ENCODE measurements at regions of chr2 and their contacts with region 1.

Region 1: GRCh38 chr2:101793277-101793969 is 95.9 kb downstream of the MAP4K4 start:
- DNase-seq: peak in 1 of 9 donors; percentile 6
- ATAC-seq: no peak
- H3K4me3 ChIP-seq: no peak overlapping the region
- H3K4me3 Mint-ChIP-seq: peak overlapping the region in 2 of 10 donors; percentile 34 to 38
- H3K27ac ChIP-seq: no peak overlapping the region
- H3K27ac Mint-ChIP-seq: peak overlapping the region in 7 of 9 donors; percentile 10 to 78 (median 41)
- H3K4me1 ChIP-seq: peaks cover 0 to 45% of the 10 kb centered on the region in 2 donors
- H3K4me1 Mint-ChIP-seq: peaks cover 32 to 94% (median 90%) of the 10 kb centered on the region in 7 donors
- H3K27me3 ChIP-seq: no peaks in the 10 kb centered on the region
- H3K27me3 Mint-ChIP-seq: no peaks in the 10 kb centered on the region

Region 2: GRCh38 chr2:101442042-101442666 is 351.3 kb before region 1 on chr2:
- CTCF ChIA-PET with region 1: no interaction called
- POLR2A ChIA-PET with region 1: no interaction called
- intact Hi-C with region 1: no loop called
- DNase-seq: peak in 3 of 9 donors; percentile 4 to 10 (median 9)
- ATAC-seq: peak; percentile 32
- H3K4me3 ChIP-seq: no peak overlapping the region
- H3K4me3 Mint-ChIP-seq: peak overlapping the region in 1 of 10 donors; percentile 34
- H3K27ac ChIP-seq: no peak overlapping the region
- H3K27ac Mint-ChIP-seq: peak overlapping the region in 3 of 9 donors; percentile 25 to 46 (median 26)
- H3K4me1 ChIP-seq: peaks cover 0 to 8% of the 10 kb centered on the region in 2 donors
- H3K4me1 Mint-ChIP-seq: peaks cover 10 to 14% (median 11%) of the 10 kb centered on the region in 7 donors
- H3K27me3 ChIP-seq: no peaks in the 10 kb centered on the region
- H3K27me3 Mint-ChIP-seq: no peaks in the 10 kb centered on the region

Region 3: DNA sequence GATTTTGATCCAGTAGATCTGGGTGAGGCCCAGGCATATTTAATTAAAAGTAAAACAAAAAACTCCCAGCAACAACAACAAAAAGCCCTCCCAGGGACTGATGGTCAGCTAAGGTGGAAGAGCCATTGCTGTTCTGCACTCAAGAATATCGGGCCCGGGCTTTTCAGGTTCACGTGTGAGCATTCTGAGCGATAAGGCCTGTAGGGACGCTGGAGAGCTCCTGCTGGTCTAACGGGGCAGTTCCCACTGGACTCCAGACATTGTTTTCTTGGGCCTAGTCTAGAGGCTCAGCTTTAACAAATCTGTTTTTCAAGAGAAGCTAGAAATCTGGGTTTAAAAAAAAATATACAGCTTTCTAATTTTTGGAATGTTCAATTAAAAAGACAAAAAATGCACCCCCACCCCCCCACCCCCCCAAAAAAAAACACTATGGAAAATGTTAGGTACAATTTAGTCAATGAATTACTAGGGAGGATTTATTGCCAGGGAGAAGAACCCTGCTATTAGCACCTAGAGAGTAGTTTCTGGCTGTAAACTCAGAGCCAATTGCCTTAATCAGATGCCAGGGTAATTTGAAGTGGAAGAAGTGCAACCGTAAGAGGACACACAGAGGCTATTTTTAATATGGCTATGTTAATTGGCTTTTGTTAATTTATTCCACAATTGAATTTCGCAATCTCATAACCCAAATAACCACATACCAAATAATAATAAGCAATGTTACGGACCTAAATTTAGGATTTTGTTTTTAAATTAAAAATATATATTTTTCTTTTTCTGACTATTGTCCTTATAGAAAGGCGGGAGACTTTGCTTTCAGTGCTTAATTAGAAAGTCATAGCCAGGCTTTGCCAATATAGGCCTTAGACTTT is 17.0 kb before region 1 on chr2:
- CTCF ChIA-PET with region 1: no interaction called
- POLR2A ChIA-PET with region 1: interaction called, 3 read pairs
- intact Hi-C with region 1: loop called in 1 of 2 experiments (anchors 2 kb)
- DNase-seq: no peak
- ATAC-seq: no peak
- H3K4me3 ChIP-seq: no peak overlapping the region
- H3K4me3 Mint-ChIP-seq: peak overlapping the region in 1 of 10 donors; percentile 63
- H3K27ac ChIP-seq: no peak overlapping the region
- H3K27ac Mint-ChIP-seq: peak overlapping the region in 2 of 9 donors; percentile 66 to 87
- H3K4me1 ChIP-seq: peaks cover 13 to 88% of the 10 kb centered on the region in 2 donors
- H3K4me1 Mint-ChIP-seq: peaks cover 72 to 100% (median 96%) of the 10 kb centered on the region in 7 donors
- H3K27me3 ChIP-seq: no peaks in the 10 kb centered on the region
- H3K27me3 Mint-ChIP-seq: no peaks in the 10 kb centered on the region

Region 4: GRCh38 chr2:101805152-101806088 is 12.0 kb after region 1 on chr2:
- CTCF ChIA-PET with region 1: no interaction called
- POLR2A ChIA-PET with region 1: interaction called, 4 read pairs
- intact Hi-C with region 1: loop called in 1 of 2 experiments (anchors 2 kb)
- DNase-seq: no peak
- ATAC-seq: no peak
- H3K4me3 ChIP-seq: no peak overlapping the region
- H3K4me3 Mint-ChIP-seq: peak overlapping the region in 6 of 10 donors; percentile 4 to 33 (median 24)
- H3K27ac ChIP-seq: no peak overlapping the region
- H3K27ac Mint-ChIP-seq: peak overlapping the region; percentile 4 to 88 (median 36)
- H3K4me1 ChIP-seq: peaks cover 5 to 37% of the 10 kb centered on the region in 2 donors
- H3K4me1 Mint-ChIP-seq: peaks cover 39 to 92% (median 86%) of the 10 kb centered on the region in 7 donors
- H3K27me3 ChIP-seq: no peaks in the 10 kb centered on the region
- H3K27me3 Mint-ChIP-seq: no peaks in the 10 kb centered on the region

Region 5: DNA sequence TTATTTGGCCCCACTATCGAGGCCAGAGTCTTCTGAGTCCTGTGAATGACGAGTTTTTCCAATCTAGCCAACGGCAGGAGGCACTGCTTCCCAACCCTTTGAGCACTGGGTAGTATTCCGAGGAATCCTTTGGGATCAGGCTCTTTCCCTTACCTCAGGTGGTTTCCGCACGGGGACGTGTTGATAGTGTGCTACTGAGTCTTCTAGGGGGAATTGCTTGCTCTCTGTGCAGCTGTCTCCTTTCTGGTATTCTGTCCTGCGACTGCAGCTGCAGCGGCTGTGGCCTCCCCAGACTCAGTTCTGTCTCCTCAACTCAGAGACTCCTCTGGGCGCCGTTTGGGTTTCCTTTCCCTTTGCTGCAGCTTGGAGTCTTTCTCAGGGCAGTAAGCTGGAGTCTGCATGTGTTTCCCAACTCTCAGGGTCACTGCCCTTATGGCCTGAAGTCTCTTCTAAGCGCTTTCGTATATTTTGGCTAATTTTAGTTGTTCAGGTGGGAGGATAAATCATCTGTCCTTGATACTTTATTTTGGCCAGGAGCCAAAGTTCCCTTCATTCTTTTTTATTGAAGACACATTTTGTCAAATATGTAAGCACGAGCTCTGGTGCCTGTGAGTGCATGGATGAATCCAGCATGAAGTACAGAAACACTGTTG is 22.4 kb after region 1 on chr2:
- CTCF ChIA-PET with region 1: no interaction called
- POLR2A ChIA-PET with region 1: no interaction called
- intact Hi-C with region 1: loop called in 1 of 2 experiments (anchors 2 kb)
- DNase-seq: no peak
- ATAC-seq: no peak
- H3K4me3 ChIP-seq: no peak overlapping the region
- H3K4me3 Mint-ChIP-seq: peak overlapping the region in 4 of 10 donors; percentile 0 to 47 (median 8)
- H3K27ac ChIP-seq: no peak overlapping the region
- H3K27ac Mint-ChIP-seq: peak overlapping the region in 8 of 9 donors; percentile 1 to 89 (median 58)
- H3K4me1 ChIP-seq: peaks cover 0 to 29% of the 10 kb centered on the region in 2 donors
- H3K4me1 Mint-ChIP-seq: peaks cover 55 to 96% (median 90%) of the 10 kb centered on the region in 7 donors
- H3K27me3 ChIP-seq: no peaks in the 10 kb centered on the region
- H3K27me3 Mint-ChIP-seq: no peaks in the 10 kb centered on the region

Region 6: DNA sequence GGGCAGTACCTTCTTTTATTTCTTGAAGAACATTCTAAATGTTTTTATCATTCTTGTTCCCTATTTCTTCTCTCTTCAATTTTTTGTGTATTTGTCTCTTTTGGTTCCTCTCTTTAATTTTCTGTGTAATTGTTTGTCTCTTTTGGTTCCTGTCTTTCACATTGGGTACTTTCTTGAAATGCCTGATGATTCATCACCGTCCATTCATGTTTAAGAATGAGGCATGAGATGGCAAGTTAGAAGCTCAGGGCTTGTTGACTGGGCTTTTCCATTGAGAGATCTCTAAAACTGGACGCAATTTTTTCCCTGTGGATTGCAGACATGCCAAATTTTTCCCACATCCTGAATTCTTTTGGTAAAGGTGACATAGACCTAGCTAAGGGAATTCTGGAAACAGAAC is 164.6 kb after region 1 on chr2:
- CTCF ChIA-PET with region 1: no interaction called
- POLR2A ChIA-PET with region 1: no interaction called
- intact Hi-C with region 1: no loop called
- DNase-seq: no peak
- ATAC-seq: peak; percentile 55
- H3K4me3 ChIP-seq: no peak overlapping the region
- H3K4me3 Mint-ChIP-seq: no peak overlapping the region
- H3K27ac ChIP-seq: no peak overlapping the region
- H3K27ac Mint-ChIP-seq: no peak overlapping the region
- H3K4me1 ChIP-seq: no peaks in the 10 kb centered on the region
- H3K4me1 Mint-ChIP-seq: peaks cover 0 to 2% (median 0%) of the 10 kb centered on the region in 7 donors
- H3K27me3 ChIP-seq: no peaks in the 10 kb centered on the region
- H3K27me3 Mint-ChIP-seq: no peaks in the 10 kb centered on the region

Measured in naive thymus-derived CD4-positive, alpha-beta T cell (primary cell).